B cell (primary cell): ENCODE measurements at regions of chr19 and their contacts with region 1.

Region 1: GRCh38 chr19:55703790-55704215 is 28.8 kb downstream of the EPN1 start:
- DNase-seq: peak; percentile 57
- ATAC-seq: peak; percentile 66
- H3K4me3 ChIP-seq: no peak overlapping the region
- H3K4me3 Mint-ChIP-seq: no peak overlapping the region
- H3K27ac ChIP-seq: no peak overlapping the region
- H3K27ac Mint-ChIP-seq: no peak overlapping the region
- H3K4me1 ChIP-seq: peaks cover 0 to 8% of the 10 kb centered on the region in 2 donors
- H3K4me1 Mint-ChIP-seq: peaks cover 8% of the 10 kb centered on the region
- H3K27me3 ChIP-seq: no peaks in the 10 kb centered on the region
- H3K27me3 Mint-ChIP-seq: no peaks in the 10 kb centered on the region
- CTCF ChIP-seq: peak; percentile 78

Region 2: DNA sequence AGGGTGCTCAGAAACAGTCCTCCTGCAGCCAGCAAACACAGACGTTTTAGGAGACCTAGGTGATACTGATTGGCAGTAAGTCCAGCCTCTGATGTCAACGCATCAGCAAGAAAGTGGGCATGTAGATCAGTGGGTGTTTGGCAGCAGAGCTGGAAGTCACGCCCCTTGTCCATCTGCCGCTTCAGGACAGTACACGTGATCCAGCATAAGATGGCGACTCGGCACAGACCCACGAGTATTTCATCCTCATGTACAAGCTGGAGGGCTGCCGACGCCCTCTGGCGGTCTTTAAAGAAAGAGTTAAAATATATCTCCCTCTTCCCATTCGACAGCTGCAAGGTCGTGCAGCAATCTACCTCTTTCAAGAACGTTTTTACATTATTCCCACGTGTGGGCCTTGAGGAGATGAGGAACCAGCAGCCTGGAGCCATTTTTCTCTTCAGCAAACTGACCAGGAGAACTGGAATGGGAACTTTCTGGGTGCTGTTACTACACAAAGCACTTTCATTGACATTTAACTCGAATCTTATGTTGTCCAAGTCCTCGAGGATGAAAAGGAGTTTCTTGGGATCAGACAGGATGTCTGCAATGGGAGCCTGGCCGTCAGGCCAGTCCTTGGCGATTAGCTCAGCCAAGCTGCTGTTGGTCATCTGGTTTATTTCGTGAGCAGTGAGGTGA is 105.7 kb after region 1 on chr19:
- CTCF ChIA-PET with region 1: interaction called, 7 read pairs
- POLR2A ChIA-PET with region 1: no interaction called
- intact Hi-C with region 1: loop called (anchors 1 kb)
- DNase-seq: peak; percentile 83
- ATAC-seq: peak; percentile 91
- H3K4me3 ChIP-seq: peak overlapping the region in 2 of 5 experiments; percentile 24 to 25
- H3K4me3 Mint-ChIP-seq: peak overlapping the region; percentile 72
- H3K27ac ChIP-seq: no peak overlapping the region
- H3K27ac Mint-ChIP-seq: peak overlapping the region; percentile 80
- H3K4me1 ChIP-seq: peaks cover 4 to 9% of the 10 kb centered on the region in 2 donors
- H3K4me1 Mint-ChIP-seq: peaks cover 10% of the 10 kb centered on the region
- H3K27me3 ChIP-seq: peaks cover 0 to 3% (median 0%) of the 10 kb centered on the region in 4 experiments
- H3K27me3 Mint-ChIP-seq: peaks cover 26% of the 10 kb centered on the region
- CTCF ChIP-seq: peak; percentile 78